BJ (cell line): ENCODE measurements at regions of chr13 and their contacts with region 1.

Region 1: DNA sequence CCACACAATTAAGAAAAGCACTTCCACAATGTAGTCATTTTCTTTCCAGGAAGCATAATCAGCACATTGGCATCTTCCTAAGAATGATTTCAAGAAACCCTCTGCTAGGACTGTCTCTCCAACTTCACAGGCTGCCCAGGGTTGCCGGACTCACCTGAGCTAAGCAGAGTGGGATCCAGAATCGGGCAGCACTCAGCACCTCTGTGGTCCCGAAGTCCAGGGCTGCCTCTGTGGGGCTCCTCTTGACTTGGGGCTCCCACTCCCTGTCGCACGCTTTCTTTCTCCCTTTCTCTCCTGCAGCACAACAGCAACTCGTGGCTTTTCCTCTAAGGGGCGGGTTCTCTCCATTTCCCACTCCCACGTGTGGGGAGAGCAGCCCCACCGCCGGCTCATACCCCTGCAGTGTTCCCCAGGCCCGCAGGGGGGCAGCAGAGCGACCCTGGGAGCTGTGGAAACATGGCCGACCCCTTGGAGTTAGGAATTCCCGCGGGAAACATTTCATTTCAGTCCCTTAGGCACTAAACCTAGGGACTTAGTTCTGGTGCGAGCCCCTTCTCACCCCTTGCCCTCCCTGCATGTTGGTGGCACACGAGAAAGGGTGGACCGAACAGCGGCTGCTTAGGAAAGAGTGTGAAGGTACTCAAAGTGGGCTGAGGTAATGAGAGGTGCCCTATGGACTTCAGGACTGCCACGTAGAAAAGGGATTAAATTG is at the start of gene TMEM272:
- DNase-seq: no peak
- H3K4me3 ChIP-seq: no peak within 1 kb of the TSS
- H3K27me3 ChIP-seq: peaks cover 3% of the 10 kb centered on the region
- CTCF ChIP-seq: peak; percentile 91
- polyA plus RNA-seq, gene TMEM272: not detected in 2 replicates

Region 2: DNA sequence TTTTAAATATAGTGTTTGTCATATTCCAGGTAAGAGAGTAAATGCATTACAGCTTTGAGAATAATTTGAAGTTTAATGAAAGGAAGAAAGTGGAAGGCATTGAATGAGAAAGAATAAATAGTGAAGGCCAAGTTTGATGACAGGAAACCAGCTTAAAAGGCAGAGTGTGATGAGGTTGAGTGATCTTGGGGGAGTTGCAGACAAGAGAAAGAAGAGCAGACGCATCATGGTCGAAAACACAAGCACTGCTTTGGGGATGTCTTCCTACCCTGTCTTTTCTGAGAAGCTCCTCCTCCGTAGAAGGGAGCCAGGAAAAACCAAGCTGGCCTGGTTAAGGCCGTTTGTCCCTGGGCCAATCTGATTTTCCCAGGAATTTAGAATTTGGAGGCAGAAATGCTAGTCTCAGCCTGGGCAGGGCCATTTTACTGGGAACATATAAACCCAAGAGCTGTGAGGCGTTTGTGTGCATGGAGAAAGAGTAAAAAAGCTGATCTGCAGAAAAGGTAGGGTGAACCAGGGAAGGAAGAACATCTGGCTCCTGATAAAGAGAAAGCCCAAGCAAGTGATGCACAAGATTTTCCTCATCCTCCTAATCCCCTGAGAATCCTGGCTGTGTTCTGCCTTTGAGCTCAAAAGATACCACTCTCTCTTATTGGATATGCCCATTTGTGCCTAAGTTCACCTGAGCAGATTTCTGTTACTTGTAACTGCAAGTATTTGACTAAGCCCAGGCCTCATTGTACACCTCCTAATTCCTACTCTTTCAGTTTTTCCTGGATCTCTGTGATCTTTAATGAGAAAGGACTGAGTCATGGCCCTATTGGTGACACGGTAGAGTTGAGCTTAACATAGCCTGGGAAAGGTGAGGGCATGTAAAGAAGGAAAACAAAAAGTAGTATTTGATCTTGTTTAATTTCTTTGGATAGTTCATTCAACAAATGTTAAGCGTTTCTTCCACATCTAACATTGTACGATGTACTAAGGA is 180.8 kb before region 1 on chr13:
- CTCF ChIA-PET with region 1: no interaction called
- POLR2A ChIA-PET with region 1: no interaction called
- DNase-seq: no peak
- H3K4me3 ChIP-seq: no peak overlapping the region
- H3K27me3 ChIP-seq: no peaks in the 10 kb centered on the region
- CTCF ChIP-seq: no peak

Region 3: DNA sequence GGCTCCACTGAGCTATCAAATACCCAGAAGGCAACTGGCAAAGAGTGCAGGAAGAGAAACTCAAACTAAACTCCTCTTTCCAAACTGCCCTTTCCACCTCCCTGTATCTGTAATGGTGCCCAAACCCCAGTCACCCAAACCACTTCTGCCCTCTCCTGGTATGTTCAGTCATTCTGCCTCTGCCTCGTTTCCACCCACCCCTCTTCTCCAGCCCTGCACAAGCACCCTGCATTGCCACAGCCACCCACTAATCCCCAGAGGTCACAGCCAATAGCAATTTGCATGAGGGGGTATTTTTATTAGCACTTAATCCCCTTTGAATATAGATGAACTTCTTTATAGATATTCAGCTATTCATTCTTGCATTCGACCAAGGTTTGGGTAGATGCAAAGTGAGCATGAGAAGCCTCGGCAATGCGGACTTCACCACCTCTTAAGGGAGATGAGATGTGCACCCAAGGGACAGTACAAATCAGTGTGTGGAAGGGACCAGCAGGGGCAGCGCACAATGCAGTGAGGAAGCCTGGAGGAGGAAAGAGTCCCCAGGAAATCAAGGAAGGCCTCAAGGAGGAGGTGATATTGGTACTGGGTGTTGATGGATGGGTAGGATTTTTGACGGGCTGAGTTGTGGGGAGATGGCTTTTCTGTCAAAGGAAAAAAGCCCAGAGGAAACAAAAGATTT is 12.4 kb before region 1 on chr13:
- CTCF ChIA-PET with region 1: interaction called, 10 read pairs
- POLR2A ChIA-PET with region 1: no interaction called
- DNase-seq: no peak
- H3K4me3 ChIP-seq: no peak overlapping the region
- H3K27me3 ChIP-seq: peaks cover 21% of the 10 kb centered on the region
- CTCF ChIP-seq: peak; percentile 31

Region 4: GRCh38 chr13:51861723-51862300 is 16.8 kb after region 1 on chr13 and contains the start of gene CCDC70:
- CTCF ChIA-PET with region 1: interaction called, 10 read pairs
- POLR2A ChIA-PET with region 1: no interaction called
- DNase-seq: no peak
- H3K4me3 ChIP-seq: no peak within 1 kb of the TSS
- H3K27me3 ChIP-seq: peaks cover 6% of the 10 kb centered on the region
- CTCF ChIP-seq: no peak
- polyA plus RNA-seq, gene CCDC70: not detected in 2 replicates

Region 5: DNA sequence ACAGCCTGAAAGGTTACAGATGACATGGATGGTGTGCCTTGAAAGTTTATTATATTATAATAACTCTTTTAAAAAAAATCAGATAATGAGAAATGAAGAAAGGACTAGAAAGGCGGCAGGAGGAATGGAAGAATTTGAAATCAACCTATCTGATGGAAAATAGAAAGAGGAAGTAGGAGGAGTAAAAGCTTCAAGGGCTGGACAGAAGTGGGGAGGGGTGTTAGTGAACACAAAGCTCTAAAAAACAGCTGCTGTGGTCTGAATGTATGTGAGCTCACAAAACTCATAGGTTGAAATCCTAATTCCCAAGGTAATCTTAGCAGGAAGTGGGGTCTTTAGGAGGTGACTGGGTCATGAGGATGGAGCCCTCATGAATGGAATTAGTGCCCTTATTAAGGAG is 36.3 kb after region 1 on chr13:
- CTCF ChIA-PET with region 1: no interaction called
- POLR2A ChIA-PET with region 1: no interaction called
- DNase-seq: no peak
- H3K4me3 ChIP-seq: no peak overlapping the region
- H3K27me3 ChIP-seq: 0 out of 2 replicates have a peak, but pooled peaks cover 2% of the 10 kb centered on the region
- CTCF ChIP-seq: no peak